Naive thymus-derived CD8-positive, alpha-beta T cell (primary cell): ENCODE measurements at regions of chr19 and their contacts with region 1.

Region 1: GRCh38 chr19:35154525-35155406 is at the start of gene FXYD5:
- DNase-seq: peak; percentile 59 to 83 (median 64)
- ATAC-seq: peak; percentile 73 to 77
- H3K4me3 Mint-ChIP-seq: peak within 1 kb of the TSS; percentile 98 to 100 (median 100)
- H3K27ac Mint-ChIP-seq: peak within 1 kb of the TSS; percentile 94 to 100 (median 99)
- H3K4me1 Mint-ChIP-seq: peaks cover 33 to 72% (median 60%) of the 10 kb centered on the region in 4 donors
- H3K27me3 Mint-ChIP-seq: no peaks in the 10 kb centered on the region
- polyA plus RNA-seq, gene FXYD5: 281 to 544 (median 452) TPM

Region 2: DNA sequence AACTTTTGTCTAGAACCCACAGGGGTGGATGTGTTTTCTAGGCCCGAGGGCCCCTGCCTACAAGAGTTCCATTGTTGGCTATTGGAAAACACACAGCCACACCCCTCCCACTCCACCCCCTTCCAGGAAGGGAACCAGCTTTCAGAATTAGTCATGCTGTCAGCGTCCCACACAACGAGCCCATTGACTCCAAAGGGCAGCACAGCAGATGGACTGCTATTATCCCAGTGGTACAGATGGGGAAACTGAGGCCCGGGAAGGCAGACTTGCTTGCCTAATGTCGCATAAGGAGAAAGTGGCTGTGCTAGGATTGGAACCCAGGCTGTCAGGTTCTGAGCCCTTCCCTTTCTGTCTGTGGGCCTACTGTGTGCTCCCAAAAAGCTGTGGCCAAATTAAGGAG is 47.2 kb before region 1 on chr19:
- POLR2A ChIA-PET with region 1: no interaction called
- DNase-seq: peak in 1 of 10 donors; percentile 24
- ATAC-seq: no peak
- H3K4me3 Mint-ChIP-seq: no peak overlapping the region
- H3K27ac Mint-ChIP-seq: peak overlapping the region in 1 of 10 donors; percentile 62
- H3K4me1 Mint-ChIP-seq: peaks cover 0 to 1% (median 0%) of the 10 kb centered on the region in 4 donors
- H3K27me3 Mint-ChIP-seq: peaks cover 0 to 8% (median 0%) of the 10 kb centered on the region in 5 donors

Region 3: GRCh38 chr19:35140962-35141637 is 13.7 kb before region 1 on chr19:
- POLR2A ChIA-PET with region 1: interaction called, 40 read pairs
- DNase-seq: peak; percentile 80 to 98 (median 93)
- ATAC-seq: peak; percentile 77 to 84
- H3K4me3 Mint-ChIP-seq: peak overlapping the region; percentile 75 to 93 (median 87)
- H3K27ac Mint-ChIP-seq: peak overlapping the region; percentile 33 to 94 (median 84)
- H3K4me1 Mint-ChIP-seq: peaks cover 23 to 49% (median 44%) of the 10 kb centered on the region in 4 donors
- H3K27me3 Mint-ChIP-seq: peaks cover 0 to 2% (median 0%) of the 10 kb centered on the region in 5 donors

Region 4: GRCh38 chr19:35168207-35168606 is 13.4 kb after region 1 on chr19:
- POLR2A ChIA-PET with region 1: interaction called, 17 read pairs
- DNase-seq: no peak
- ATAC-seq: no peak
- H3K4me3 Mint-ChIP-seq: peak overlapping the region in 1 of 10 donors; percentile 29
- H3K27ac Mint-ChIP-seq: peak overlapping the region; percentile 54 to 95 (median 94)
- H3K4me1 Mint-ChIP-seq: peaks cover 22 to 53% (median 46%) of the 10 kb centered on the region in 4 donors
- H3K27me3 Mint-ChIP-seq: no peaks in the 10 kb centered on the region

Region 5: DNA sequence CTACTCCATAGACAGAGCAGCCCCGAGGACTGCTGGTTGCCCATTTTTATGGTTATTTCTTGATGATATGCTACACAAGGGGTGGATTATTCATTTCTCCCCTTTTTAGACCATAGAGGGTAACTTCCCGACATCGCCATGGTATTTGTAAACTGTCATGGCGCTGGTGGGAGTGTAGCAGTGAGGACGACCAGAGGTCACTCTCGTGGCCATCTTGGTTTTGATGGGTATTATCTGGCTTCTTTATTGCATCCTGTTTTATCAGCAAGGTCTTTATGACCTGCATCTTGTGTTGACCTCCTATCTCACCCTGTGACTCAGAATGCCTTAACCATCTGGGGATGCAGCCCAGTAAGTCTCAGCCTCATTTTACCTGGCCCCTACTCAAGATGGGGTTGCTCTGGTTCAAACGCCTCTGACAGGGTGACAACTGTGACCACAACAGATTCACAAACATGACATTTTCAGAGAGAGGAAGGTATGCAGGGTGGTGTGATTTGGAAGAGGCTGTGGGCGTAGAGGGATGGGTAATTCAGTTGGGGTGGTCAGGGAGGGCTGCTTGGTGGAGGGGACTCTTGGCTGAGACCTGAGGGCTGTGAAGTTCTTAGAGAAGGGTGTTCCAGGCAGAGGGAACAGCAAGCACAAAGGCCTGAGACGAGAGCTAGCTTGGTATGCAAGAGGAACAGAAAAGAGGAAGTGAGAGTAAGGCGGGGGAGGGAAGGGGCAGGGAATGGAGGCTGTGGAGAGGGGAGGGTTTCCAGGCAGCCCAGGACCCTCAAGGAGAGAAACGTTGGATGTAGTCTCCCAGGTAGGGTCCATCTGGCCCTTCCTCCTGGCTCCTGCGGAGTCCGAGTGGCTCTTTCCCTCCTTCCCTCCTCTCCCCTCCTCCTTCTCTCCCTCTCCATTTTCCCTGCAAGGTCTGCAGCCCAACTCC is 50.3 kb after region 1 on chr19:
- POLR2A ChIA-PET with region 1: interaction called, 77 read pairs
- DNase-seq: peak in 2 of 10 donors; percentile 16 to 43
- ATAC-seq: no peak
- H3K4me3 Mint-ChIP-seq: peak overlapping the region in 9 of 10 donors; percentile 34 to 80 (median 70)
- H3K27ac Mint-ChIP-seq: peak overlapping the region; percentile 92 to 100 (median 98)
- H3K4me1 Mint-ChIP-seq: peaks cover 36 to 89% (median 81%) of the 10 kb centered on the region in 4 donors
- H3K27me3 Mint-ChIP-seq: no peaks in the 10 kb centered on the region

Region 6: DNA sequence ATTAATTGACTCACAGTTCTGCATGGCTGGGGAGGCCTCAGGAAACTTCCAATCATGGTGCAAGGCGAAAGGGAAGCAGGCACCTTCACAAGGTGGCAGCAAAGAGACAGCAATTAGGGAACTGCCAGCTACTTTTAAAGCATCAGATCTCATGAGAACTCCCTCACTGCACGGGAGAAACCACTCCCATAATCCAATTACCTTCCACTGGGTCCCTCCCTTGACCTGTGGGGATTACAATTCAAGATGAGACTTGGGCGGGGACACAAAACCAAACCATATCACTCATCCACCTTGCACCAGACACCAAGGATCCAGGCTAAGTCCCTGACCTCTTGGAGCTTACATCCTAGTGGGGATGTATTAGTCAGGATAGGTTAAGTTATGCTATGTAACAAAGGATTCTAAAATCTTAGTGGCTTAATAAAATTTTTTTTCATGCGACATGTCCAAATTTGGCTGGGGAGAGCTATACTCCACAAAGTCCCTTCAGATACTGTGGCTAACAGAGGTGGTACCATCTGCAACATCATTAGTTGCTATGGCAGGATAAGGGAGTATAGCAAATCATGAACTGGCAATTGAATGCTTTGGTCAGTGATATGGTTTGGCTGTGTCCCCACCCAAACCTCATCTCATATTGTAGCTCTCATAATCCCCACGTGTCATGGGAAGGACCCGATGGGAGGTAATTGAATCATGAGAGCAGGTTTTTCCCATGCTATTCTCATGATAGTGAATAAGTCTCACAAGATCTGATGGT is 82.1 kb after region 1 on chr19:
- POLR2A ChIA-PET with region 1: interaction called, 13 read pairs
- DNase-seq: peak in 1 of 10 donors; percentile 66
- ATAC-seq: no peak
- H3K4me3 Mint-ChIP-seq: no peak overlapping the region
- H3K27ac Mint-ChIP-seq: peak overlapping the region in 8 of 10 donors; percentile 8 to 72 (median 62)
- H3K4me1 Mint-ChIP-seq: peaks cover 19 to 35% (median 32%) of the 10 kb centered on the region in 4 donors
- H3K27me3 Mint-ChIP-seq: no peaks in the 10 kb centered on the region

Region 7: GRCh38 chr19:35313597-35313996 is 158.8 kb after region 1 on chr19:
- POLR2A ChIA-PET with region 1: no interaction called
- DNase-seq: no peak
- ATAC-seq: no peak
- H3K4me3 Mint-ChIP-seq: no peak overlapping the region
- H3K27ac Mint-ChIP-seq: peak overlapping the region in 1 of 10 donors; percentile 6
- H3K4me1 Mint-ChIP-seq: peaks cover 1 to 26% (median 5%) of the 10 kb centered on the region in 4 donors
- H3K27me3 Mint-ChIP-seq: peaks cover 0 to 2% (median 0%) of the 10 kb centered on the region in 5 donors